PC-3 (cell line): ENCODE measurements at regions of chr6 and their contacts with region 1.

Region 1: GRCh38 chr6:130282234-130282995 is 59.7 kb upstream of the SAMD3 start:
- DNase-seq: peak; percentile 41
- ATAC-seq: peak; percentile 65; the same call in 1 of the 2 replicates
- H3K4me3 ChIP-seq: no peak overlapping the region
- H3K27ac ChIP-seq: no peak overlapping the region
- H3K4me1 ChIP-seq: no peaks in the 10 kb centered on the region
- H3K27me3 ChIP-seq: no peaks in the 10 kb centered on the region
- CTCF ChIP-seq: peak; percentile 64

Region 2: DNA sequence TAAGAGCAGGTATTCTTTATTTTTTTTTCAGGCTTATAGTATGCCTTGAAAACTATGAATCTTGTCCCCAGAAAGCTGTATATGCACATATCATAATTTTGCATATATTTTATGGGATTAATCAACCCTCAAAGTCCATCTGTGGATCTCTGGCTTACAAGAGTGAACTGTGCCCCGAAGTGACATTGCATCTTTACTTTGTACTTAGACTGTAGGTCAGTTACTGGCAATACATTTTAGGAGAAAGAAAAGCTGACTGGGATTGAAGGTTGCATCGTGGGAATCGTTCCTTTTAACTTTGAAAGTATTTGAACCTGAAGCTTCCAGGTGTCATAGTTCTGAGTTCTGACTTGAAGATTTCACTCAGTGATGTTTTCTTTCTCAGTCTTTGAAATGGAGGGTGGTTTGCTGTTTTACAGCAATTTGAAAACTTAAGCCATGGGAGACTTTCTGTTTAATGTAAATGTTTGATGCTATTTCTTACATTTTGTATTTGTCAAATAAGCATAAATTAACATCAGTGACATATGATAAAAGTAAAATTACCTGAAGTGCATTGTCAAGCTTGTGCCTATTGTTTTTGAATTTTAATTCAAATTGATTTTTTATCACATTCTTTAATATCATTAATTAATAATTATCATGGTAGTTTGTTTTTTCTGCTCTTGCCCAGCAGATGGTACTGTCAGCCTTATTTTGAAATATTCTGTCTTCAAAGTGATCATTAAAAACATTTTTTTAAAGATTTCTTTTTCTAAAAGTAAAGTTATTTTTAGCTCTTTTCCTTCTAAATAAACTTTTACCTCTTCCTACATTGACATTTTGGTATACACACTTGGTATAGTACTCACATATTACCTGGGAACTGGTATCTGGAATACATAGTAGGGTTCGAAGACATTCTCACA is 235.1 kb before region 1 on chr6:
- CTCF ChIA-PET with region 1: no interaction called
- POLR2A ChIA-PET with region 1: no interaction called
- intact Hi-C with region 1: loop called (anchors 5 kb)
- DNase-seq: no peak
- ATAC-seq: no peak
- H3K4me3 ChIP-seq: no peak overlapping the region
- H3K27ac ChIP-seq: no peak overlapping the region
- H3K4me1 ChIP-seq: no peaks in the 10 kb centered on the region
- H3K27me3 ChIP-seq: no peaks in the 10 kb centered on the region
- CTCF ChIP-seq: peak; percentile 29; the same call in 1 of the 2 replicates

Region 3: GRCh38 chr6:130076512-130076911 is 205.9 kb before region 1 on chr6:
- CTCF ChIA-PET with region 1: no interaction called
- POLR2A ChIA-PET with region 1: no interaction called
- intact Hi-C with region 1: loop called (anchors 2 kb)
- DNase-seq: peak; percentile 8
- ATAC-seq: no peak
- H3K4me3 ChIP-seq: no peak overlapping the region
- H3K27ac ChIP-seq: no peak overlapping the region
- H3K4me1 ChIP-seq: no peaks in the 10 kb centered on the region
- H3K27me3 ChIP-seq: no peaks in the 10 kb centered on the region
- CTCF ChIP-seq: peak; percentile 28; the same call in 1 of the 2 replicates

Region 4: DNA sequence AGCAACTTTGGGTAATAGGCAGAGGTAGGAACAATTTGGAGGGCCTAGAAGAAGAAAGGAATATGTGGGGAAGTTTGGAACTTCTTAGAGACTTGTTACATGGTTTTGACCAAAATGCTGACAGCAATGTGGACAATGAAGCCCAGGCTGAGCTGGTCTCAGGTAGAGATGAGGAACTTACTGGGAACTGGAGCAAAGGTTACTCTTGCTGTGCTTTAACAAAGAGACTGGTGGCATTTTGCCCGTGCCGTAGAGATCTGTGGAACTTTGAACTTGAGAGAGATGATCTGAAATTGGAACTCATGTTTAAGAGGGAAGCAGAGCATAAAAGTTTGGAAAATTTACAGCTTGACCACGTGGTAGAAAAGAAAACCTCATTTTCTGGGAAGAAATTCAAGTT is 55.1 kb after region 1 on chr6:
- CTCF ChIA-PET with region 1: no interaction called
- POLR2A ChIA-PET with region 1: no interaction called
- intact Hi-C with region 1: no loop called
- DNase-seq: no peak
- ATAC-seq: no peak
- H3K4me3 ChIP-seq: no peak overlapping the region
- H3K27ac ChIP-seq: no peak overlapping the region
- H3K4me1 ChIP-seq: no peaks in the 10 kb centered on the region
- H3K27me3 ChIP-seq: no peaks in the 10 kb centered on the region
- CTCF ChIP-seq: no peak